HepG2 (cell line): ENCODE measurements at regions of chr17 and their contacts with region 1.

Region 1: DNA sequence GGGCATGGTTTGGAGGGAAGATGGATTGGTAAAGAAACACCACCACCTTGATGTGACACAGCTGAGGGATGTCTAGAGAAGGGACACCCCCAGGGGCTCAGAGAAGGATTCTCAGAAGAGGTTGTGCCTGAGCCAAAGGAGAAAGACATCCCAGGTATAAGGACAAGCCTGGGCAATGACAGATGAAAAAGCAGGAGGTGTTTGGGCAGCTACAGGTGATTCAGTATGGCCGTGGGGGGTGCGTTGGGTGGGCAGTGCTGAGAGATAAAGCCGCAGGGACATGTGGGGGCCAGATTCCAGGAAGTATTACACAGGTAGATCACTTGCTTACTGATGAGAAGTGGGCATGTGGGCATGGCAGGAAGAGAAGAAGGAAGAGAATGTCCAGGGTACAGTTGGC is 7.0 kb downstream of the TMEM95 start:
- DNase-seq: no peak
- ATAC-seq: no peak
- H3K4me3 ChIP-seq: no peak overlapping the region
- H3K27ac ChIP-seq: no peak overlapping the region
- H3K4me1 ChIP-seq: peaks cover 14% of the 10 kb centered on the region
- H3K27me3 ChIP-seq: peaks cover 0 to 6% of the 10 kb centered on the region in 2 experiments; a peak in 1 of 5 replicates
- CTCF ChIP-seq: no peak
- EP300 ChIP-seq: no peak
- POLR2A ChIP-seq: no peak
- RAD21 ChIP-seq: no peak

Region 2: DNA sequence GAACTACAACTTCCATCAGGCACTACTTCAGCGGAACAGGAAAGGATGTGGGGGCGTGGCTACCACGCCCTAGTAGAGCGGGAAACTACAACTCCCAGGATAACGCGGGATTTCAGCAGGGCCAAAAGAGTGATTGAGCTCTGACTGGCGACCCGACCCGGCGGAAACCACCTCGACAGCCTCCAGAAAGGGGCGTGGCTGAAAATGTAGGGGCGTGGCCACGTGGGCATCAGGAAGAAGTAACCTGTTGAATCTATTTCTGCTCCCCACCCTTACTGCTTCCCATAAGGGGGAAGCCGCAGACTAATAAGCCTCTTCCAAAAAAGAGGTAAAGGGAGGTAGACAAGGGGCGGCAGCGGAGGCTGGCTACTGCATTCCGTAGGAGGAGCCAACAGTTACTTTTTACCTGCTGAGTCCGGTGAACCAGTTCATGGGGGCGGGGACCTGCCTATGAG is 73.3 kb after region 1 on chr17 and contains the start of gene TMEM102:
- CTCF ChIA-PET with region 1: interaction called, 11 read pairs
- POLR2A ChIA-PET with region 1: interaction called, 3 read pairs
- in situ Hi-C with region 1: loop called (anchors 5 kb)
- intact Hi-C with region 1: loop called (anchors 2 kb)
- DNase-seq: peak; percentile 97
- ATAC-seq: peak; percentile 85
- H3K4me3 ChIP-seq: peak within 1 kb of the TSS; percentile 62 to 75 (median 72)
- H3K27ac ChIP-seq: peak within 1 kb of the TSS; percentile 13
- H3K4me1 ChIP-seq: peaks cover 24% of the 10 kb centered on the region
- H3K27me3 ChIP-seq: no peaks in the 10 kb centered on the region; a peak in 1 of 5 replicates
- CTCF ChIP-seq: 0 out of 2 replicates have a peak, but pooled peaks have one; percentile 6
- EP300 ChIP-seq: no peak
- POLR2A ChIP-seq: no peak
- RAD21 ChIP-seq: no peak
- total RNA-seq, gene TMEM102: 2.0 and 3.1 TPM in 2 replicates